GM10248 (cell line): ENCODE measurements at regions of chr22 and their contacts with region 1.

Region 1: GRCh38 chr22:22450343-22450839 is 58.2 kb downstream of the ZNF280B start:
- DNase-seq: peak; percentile 78
- CTCF ChIP-seq: peak; percentile 4

Region 2: DNA sequence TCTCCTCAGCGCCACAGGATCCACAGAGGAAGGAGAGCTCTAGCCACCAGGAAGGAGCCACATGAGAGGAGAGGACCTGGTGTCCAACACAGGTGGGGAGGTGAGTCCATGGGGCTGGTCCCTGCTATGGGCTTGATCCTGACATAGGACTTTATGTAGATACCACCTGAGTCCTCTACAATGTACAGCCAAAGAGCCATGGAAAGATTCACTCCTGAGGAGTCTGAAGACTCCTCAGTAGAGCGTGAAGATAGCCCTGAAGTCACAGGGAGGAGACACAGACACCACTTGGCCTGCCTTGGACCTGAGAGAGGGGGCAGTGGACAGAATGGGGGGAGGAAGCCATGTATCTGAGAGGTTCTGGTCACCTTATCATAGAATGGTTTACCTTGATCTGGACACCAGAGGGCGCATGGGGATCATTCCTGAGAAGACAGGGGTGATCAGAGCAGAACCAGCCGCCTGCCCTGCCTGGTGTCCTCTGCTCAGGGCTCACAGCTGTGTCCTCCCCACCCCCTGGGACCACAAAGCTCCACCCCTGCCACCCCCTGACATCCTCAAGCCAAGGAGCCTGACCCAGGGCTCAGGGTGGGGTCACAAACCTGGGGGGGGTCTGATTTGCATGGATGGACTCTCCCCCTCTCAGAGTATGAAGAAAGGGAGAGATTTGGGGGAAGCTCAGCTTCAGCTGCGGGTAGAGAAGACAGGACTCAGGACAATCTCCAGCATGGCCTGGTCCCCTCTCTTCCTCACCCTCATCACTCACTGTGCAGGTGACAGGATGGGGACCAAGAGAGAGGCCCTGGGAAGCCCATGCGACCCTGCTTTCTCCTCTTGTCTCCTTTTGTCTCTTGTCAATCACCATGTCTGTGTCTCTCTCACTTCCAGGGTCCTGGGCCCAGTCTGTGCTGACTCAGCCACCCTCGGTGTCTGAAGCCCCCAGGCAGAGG is 18.8 kb before region 1 on chr22:
- CTCF ChIA-PET with region 1: interaction called, 21 read pairs
- POLR2A ChIA-PET with region 1: no interaction called
- DNase-seq: peak; percentile 84
- CTCF ChIP-seq: peak; percentile 52